Ascending aorta (tissue), 2 donors: ENCODE measurements at regions of chr3 and their contacts with region 1.

Region 1: GRCh38 chr3:123584988-123585937 is at the start of gene HACD2:
- DNase-seq: peak; percentile 84 to 98
- H3K4me3 ChIP-seq: peak within 1 kb of the TSS; percentile 87 to 92
- H3K27ac ChIP-seq: peak within 1 kb of the TSS; percentile 83 to 86
- H3K4me1 ChIP-seq: peaks cover 4 to 14% of the 10 kb centered on the region in 2 donors
- H3K27me3 ChIP-seq: no peaks in the 10 kb centered on the region
- CTCF ChIP-seq: no peak
- total RNA-seq, gene HACD2: 10.2 TPM

Region 2: DNA sequence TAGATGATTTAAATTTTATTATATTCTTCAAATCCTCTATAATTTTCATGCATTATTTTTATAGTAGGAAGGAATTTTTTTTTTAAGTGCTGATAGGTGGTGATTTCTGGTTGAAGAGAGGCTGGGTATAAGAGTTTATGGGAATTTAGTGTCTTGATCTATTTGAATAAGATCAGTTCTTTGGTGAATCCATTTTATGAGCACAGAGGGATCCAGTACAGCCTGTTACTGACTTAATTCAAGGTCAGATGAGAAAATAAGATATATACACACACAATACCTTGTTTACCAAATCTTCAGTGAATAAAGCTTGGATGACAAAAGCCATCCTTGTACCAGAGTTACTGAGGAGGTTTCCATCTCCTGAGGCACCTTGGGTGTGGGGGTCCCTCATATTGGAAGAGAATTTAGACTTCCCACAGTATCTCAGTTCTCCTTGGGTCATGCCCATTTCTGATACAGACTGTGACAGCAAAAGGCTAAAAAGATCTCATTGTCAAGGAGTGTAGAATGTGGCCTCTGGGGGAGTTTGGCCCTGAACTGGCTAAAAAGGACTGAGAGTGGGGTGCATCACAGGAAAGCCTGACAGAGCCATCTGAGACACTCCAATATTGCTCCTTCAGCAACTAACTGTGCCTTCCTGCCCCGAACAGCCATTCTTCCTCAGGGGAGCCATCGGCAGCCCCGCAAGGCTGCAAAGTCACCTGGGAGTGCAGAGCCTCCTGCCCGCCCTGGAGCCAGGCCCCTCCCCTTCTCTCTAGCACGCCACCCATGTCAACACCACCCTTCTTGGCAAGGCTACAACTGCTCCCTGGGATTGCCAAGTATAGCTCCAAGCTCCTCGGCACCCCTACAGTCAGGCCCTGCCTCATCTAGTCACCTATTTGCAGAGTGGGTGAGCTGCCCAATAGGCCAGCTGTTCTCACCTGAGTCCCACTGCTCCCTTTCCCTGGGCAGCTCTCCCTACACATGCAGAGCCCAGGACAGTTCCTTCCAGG is 42.7 kb after region 1 on chr3:
- intact Hi-C with region 1: loop called (anchors 5 kb)
- DNase-seq: peak in 1 of 2 donors; percentile 72
- H3K4me3 ChIP-seq: no peak overlapping the region
- H3K27ac ChIP-seq: peak overlapping the region; percentile 28 to 46
- H3K4me1 ChIP-seq: peaks cover 2 to 12% of the 10 kb centered on the region in 2 donors
- H3K27me3 ChIP-seq: no peaks in the 10 kb centered on the region
- CTCF ChIP-seq: no peak